ENCODE measurements at regions of chr10 and their contacts with region 1.

Region 1: GRCh38 chr10:3972460-3973301 is 187.7 kb upstream of the KLF6 start:
- DNase-seq: no peak
- ATAC-seq: peak; percentile 89
- H3K4me3 Mint-ChIP-seq: peak overlapping the region; percentile 82
- H3K27ac Mint-ChIP-seq: peak overlapping the region; percentile 96
- H3K4me1 Mint-ChIP-seq: peaks cover 51% of the 10 kb centered on the region
- H3K27me3 Mint-ChIP-seq: no peaks in the 10 kb centered on the region

Region 2: GRCh38 chr10:3765146-3765545 is 207.5 kb before region 1 on chr10:
- POLR2A ChIA-PET with region 1: no interaction called
- DNase-seq: no peak
- ATAC-seq: peak; percentile 80
- H3K4me3 Mint-ChIP-seq: peak overlapping the region; percentile 52
- H3K27ac Mint-ChIP-seq: peak overlapping the region; percentile 52
- H3K4me1 Mint-ChIP-seq: peaks cover 37% of the 10 kb centered on the region
- H3K27me3 Mint-ChIP-seq: no peaks in the 10 kb centered on the region

Region 3: GRCh38 chr10:3805791-3806461 is 166.8 kb before region 1 on chr10:
- POLR2A ChIA-PET with region 1: interaction called, 33 read pairs
- DNase-seq: no peak
- ATAC-seq: no peak
- H3K4me3 Mint-ChIP-seq: peak overlapping the region; percentile 77
- H3K27ac Mint-ChIP-seq: peak overlapping the region; percentile 98
- H3K4me1 Mint-ChIP-seq: peaks cover 57% of the 10 kb centered on the region
- H3K27me3 Mint-ChIP-seq: no peaks in the 10 kb centered on the region

Region 4: GRCh38 chr10:3811291-3811870 is 161.3 kb before region 1 on chr10:
- POLR2A ChIA-PET with region 1: interaction called, 33 read pairs
- DNase-seq: no peak
- ATAC-seq: peak; percentile 41
- H3K4me3 Mint-ChIP-seq: peak overlapping the region; percentile 81
- H3K27ac Mint-ChIP-seq: peak overlapping the region; percentile 97
- H3K4me1 Mint-ChIP-seq: peaks cover 75% of the 10 kb centered on the region
- H3K27me3 Mint-ChIP-seq: no peaks in the 10 kb centered on the region

Region 5: DNA sequence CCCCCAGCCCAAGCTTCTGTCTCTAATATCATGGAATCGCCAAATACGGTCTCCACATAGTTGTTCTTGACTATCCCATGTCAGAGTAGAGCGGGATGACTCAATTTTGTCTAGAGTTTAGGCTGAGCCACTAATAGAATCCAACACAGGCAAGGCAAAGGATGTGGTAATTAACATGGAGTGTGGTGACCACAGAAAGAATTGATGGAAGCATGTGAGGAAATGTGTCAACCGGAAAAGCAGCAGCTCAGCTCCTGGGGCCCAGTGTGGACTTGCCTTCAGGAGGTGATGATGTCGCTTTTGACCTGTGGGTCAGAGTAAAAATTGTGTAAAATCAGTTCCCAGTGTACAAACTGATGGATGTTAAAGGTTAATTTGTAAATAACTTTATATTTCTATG is 48.3 kb before region 1 on chr10:
- POLR2A ChIA-PET with region 1: no interaction called
- DNase-seq: no peak
- ATAC-seq: no peak
- H3K4me3 Mint-ChIP-seq: no peak overlapping the region
- H3K27ac Mint-ChIP-seq: peak overlapping the region; percentile 45
- H3K4me1 Mint-ChIP-seq: peaks cover 28% of the 10 kb centered on the region
- H3K27me3 Mint-ChIP-seq: no peaks in the 10 kb centered on the region

Region 6: GRCh38 chr10:3992382-3993178 is 19.9 kb after region 1 on chr10:
- POLR2A ChIA-PET with region 1: no interaction called
- DNase-seq: no peak
- ATAC-seq: no peak
- H3K4me3 Mint-ChIP-seq: no peak overlapping the region
- H3K27ac Mint-ChIP-seq: peak overlapping the region; percentile 1
- H3K4me1 Mint-ChIP-seq: peaks cover 13% of the 10 kb centered on the region
- H3K27me3 Mint-ChIP-seq: no peaks in the 10 kb centered on the region

Region 7: DNA sequence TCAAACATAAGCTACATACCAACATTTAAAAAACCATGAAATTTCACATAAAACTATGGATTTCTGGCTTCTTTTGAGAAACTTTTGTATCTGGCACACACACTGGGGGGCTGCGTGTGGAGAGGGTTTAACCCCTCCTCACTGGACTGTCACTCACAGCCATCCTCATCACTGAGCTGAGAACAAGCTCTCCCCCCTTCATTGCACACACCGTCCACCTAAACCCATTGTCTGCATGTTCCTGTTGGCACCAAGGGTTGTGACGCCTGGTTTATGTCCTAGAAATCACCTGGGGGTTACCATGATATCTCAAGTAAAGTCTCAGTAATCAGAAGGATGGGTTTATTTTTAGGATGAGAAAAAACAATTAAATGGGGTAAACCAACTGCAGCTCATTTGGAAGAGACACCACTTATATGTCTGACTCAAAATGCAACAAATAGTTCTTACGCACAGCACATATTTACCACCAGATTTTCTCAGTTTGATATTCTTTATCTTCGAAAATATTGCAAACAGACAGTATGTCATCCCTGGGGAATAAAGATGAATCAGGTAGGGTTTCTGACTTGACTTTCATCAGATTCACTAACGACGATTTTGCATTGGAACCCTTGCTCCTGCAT is 30.8 kb after region 1 on chr10:
- POLR2A ChIA-PET with region 1: no interaction called
- DNase-seq: no peak
- ATAC-seq: no peak
- H3K4me3 Mint-ChIP-seq: no peak overlapping the region
- H3K27ac Mint-ChIP-seq: no peak overlapping the region
- H3K4me1 Mint-ChIP-seq: peaks cover 3% of the 10 kb centered on the region
- H3K27me3 Mint-ChIP-seq: no peaks in the 10 kb centered on the region

Region 8: GRCh38 chr10:4131407-4132228 is 158.9 kb after region 1 on chr10:
- POLR2A ChIA-PET with region 1: interaction called, 10 read pairs
- DNase-seq: peak; percentile 36
- ATAC-seq: peak; percentile 73
- H3K4me3 Mint-ChIP-seq: no peak overlapping the region
- H3K27ac Mint-ChIP-seq: no peak overlapping the region
- H3K4me1 Mint-ChIP-seq: peaks cover 44% of the 10 kb centered on the region
- H3K27me3 Mint-ChIP-seq: no peaks in the 10 kb centered on the region

Measured in activated naive CD8-positive, alpha-beta T cell treated with anti-CD3 and anti-CD28 coated beads, Interleukin-2, amount 10 ng/mL, durations not matched to agents 7 days and 5 days (primary cell).